ENCODE measurements at regions of chr5 and their contacts with region 1.

Region 1: GRCh38 chr5:105849701-105850100 is 1821.0 kb downstream of the EFNA5 start:
- DNase-seq: no peak
- H3K4me3 ChIP-seq: no peak overlapping the region
- H3K27ac ChIP-seq: no peak overlapping the region
- H3K4me1 ChIP-seq: no peaks in the 10 kb centered on the region
- H3K27me3 ChIP-seq: no peaks in the 10 kb centered on the region
- CTCF ChIP-seq: no peak
- EP300 ChIP-seq: no peak
- POLR2A ChIP-seq: no peak

Region 2: DNA sequence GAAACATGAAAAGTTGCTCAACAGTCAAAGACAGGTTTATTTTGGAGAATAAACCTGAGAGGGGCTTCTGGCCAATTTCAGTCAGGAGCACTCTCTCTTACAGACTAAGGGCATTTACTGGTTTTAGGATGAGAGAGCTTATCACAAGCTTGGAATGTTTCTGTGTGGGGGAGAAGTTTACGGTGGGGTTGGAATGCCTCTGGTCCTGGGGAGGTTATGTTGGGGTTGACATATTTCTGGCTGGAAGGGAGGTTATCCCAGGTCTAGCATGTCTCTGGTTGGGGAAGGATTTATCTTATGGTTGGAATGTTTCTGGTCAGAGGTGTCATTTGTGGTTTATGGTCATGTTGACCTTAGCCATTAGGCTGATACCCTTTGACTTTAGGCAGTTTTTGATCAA is 46.3 kb before region 1 on chr5:
- in situ Hi-C with region 1: no loop called
- intact Hi-C with region 1: loop called (anchors 2 kb)
- DNase-seq: no peak
- H3K4me3 ChIP-seq: no peak overlapping the region
- H3K27ac ChIP-seq: no peak overlapping the region
- H3K4me1 ChIP-seq: no peaks in the 10 kb centered on the region
- H3K27me3 ChIP-seq: no peaks in the 10 kb centered on the region
- CTCF ChIP-seq: no peak
- EP300 ChIP-seq: no peak
- POLR2A ChIP-seq: no peak

Region 3: DNA sequence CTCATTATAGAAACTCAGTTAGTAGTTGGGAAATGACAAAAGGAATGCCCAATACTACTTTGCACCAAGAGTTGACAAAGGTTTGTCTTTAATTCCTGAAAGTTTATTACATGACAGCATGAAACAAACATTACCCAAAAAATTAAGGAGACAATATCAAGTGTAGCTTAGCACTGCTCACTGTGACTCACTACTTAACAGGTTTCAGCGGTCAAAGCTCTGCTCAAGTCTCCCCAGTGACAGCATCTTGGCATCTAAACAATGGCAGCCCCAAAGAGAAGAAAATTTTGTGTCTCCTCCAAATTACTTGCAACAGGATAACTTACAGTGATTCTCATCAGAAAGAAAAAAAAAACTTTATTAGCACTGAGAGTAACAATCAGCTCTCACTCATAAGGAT is 790.8 kb after region 1 on chr5:
- in situ Hi-C with region 1: no loop called
- intact Hi-C with region 1: loop called (anchors 5 kb)
- DNase-seq: no peak
- H3K4me3 ChIP-seq: no peak overlapping the region
- H3K27ac ChIP-seq: no peak overlapping the region
- H3K4me1 ChIP-seq: no peaks in the 10 kb centered on the region
- H3K27me3 ChIP-seq: no peaks in the 10 kb centered on the region
- CTCF ChIP-seq: no peak
- EP300 ChIP-seq: no peak
- POLR2A ChIP-seq: no peak

Region 4: GRCh38 chr5:106833517-106833916 is 983.8 kb after region 1 on chr5:
- in situ Hi-C with region 1: no loop called
- intact Hi-C with region 1: no loop called
- DNase-seq: no peak
- H3K4me3 ChIP-seq: no peak overlapping the region
- H3K27ac ChIP-seq: no peak overlapping the region
- H3K4me1 ChIP-seq: no peaks in the 10 kb centered on the region
- H3K27me3 ChIP-seq: no peaks in the 10 kb centered on the region
- CTCF ChIP-seq: no peak
- EP300 ChIP-seq: no peak
- POLR2A ChIP-seq: no peak